ENCODE measurements at regions of chr7 and their contacts with region 1.

Region 1: GRCh38 chr7:34939175-34939574 is 98.1 kb downstream of the DPY19L1 start:
- DNase-seq: no peak
- H3K4me3 Mint-ChIP-seq: no peak overlapping the region
- H3K27ac Mint-ChIP-seq: no peak overlapping the region
- H3K4me1 Mint-ChIP-seq: peaks cover 9% of the 10 kb centered on the region
- H3K27me3 Mint-ChIP-seq: no peaks in the 10 kb centered on the region
- CTCF ChIP-seq: no peak

Region 2: DNA sequence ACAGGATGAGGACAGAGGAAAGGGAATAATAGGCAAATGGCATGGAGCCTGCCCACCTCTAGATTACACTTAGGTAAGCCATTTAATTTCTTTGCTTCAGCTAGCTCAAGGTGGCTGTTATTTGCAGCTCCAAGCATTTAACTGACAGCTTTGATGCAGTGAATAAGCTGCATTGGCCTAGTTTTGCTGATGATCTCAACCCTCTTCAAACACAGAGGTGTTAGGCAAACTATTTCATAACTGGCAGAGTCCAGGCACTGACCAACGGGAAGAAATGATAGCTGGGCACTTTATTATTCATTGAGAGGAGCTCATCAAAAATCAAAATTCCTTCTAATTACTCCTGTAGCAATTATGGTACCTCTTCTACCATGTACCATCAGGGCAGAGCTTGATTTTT is 716.4 kb before region 1 on chr7:
- CTCF ChIA-PET with region 1: no interaction called
- intact Hi-C with region 1: no loop called
- DNase-seq: no peak
- H3K4me3 Mint-ChIP-seq: no peak overlapping the region
- H3K27ac Mint-ChIP-seq: no peak overlapping the region
- H3K4me1 Mint-ChIP-seq: no peaks in the 10 kb centered on the region
- H3K27me3 Mint-ChIP-seq: peaks cover 51% of the 10 kb centered on the region
- CTCF ChIP-seq: no peak

Region 3: DNA sequence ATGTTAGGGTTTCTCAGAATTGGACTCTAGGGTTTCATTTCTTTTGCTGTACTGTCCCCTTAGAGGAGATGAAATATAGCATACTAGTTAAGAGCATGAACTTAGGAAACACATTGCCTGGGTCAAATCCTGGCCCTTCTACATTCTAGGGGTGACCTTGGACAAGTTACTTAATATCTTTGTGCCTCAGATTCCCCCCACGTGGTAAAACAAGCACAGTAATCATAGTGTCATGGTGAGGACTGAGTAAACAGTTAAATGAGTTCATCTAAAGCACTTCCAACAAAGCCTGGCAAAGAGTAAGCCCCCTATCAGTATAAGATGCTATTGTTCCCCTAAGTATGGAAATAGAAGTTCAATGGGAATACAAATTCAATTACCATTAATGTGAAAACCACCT is 93.0 kb after region 1 on chr7:
- CTCF ChIA-PET with region 1: no interaction called
- intact Hi-C with region 1: loop called (anchors 5 kb)
- DNase-seq: no peak
- H3K4me3 Mint-ChIP-seq: no peak overlapping the region
- H3K27ac Mint-ChIP-seq: no peak overlapping the region
- H3K4me1 Mint-ChIP-seq: peaks cover 63% of the 10 kb centered on the region
- H3K27me3 Mint-ChIP-seq: no peaks in the 10 kb centered on the region
- CTCF ChIP-seq: no peak